ENCODE measurements at regions of chr7 and their contacts with region 1.

Region 1: GRCh38 chr7:92567460-92567859 is 22.7 kb downstream of the FAM133B start:
- DNase-seq: no peak
- CTCF ChIP-seq: no peak

Region 2: GRCh38 chr7:92547579-92547978 is 19.9 kb before region 1 on chr7:
- CTCF ChIA-PET with region 1: interaction called, 16 read pairs
- POLR2A ChIA-PET with region 1: no interaction called
- DNase-seq: no peak
- CTCF ChIP-seq: no peak

Region 3: DNA sequence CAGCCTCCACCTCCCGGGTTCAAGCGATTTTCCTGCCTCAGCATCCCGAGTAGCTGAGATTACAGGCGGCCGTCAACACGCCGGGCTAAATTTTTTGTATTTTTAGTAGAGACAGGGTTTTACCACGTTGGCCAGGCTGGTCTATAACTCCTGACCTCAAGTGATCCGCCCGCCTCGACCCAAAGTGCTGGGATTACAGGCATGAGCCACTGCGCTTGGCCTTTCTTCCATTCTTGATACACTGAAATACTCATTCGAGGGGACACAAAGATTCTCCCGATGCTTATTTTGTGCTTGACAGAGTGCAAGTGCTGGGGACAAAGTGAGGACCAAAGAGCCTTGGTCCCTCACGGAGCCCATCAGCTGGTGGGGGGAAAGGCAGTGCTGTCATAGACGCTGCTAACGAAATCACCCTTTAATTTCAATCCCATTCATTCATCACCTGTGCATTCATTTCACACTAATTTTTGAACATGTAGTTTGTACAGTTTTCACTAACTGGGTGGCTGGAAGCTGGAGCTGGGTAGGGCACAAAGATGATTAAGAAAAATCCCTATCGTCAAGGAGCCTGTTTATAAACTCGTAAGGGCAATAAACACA is 23.4 kb after region 1 on chr7:
- CTCF ChIA-PET with region 1: interaction called, 11 read pairs
- POLR2A ChIA-PET with region 1: no interaction called
- DNase-seq: no peak
- CTCF ChIP-seq: no peak

Region 4: DNA sequence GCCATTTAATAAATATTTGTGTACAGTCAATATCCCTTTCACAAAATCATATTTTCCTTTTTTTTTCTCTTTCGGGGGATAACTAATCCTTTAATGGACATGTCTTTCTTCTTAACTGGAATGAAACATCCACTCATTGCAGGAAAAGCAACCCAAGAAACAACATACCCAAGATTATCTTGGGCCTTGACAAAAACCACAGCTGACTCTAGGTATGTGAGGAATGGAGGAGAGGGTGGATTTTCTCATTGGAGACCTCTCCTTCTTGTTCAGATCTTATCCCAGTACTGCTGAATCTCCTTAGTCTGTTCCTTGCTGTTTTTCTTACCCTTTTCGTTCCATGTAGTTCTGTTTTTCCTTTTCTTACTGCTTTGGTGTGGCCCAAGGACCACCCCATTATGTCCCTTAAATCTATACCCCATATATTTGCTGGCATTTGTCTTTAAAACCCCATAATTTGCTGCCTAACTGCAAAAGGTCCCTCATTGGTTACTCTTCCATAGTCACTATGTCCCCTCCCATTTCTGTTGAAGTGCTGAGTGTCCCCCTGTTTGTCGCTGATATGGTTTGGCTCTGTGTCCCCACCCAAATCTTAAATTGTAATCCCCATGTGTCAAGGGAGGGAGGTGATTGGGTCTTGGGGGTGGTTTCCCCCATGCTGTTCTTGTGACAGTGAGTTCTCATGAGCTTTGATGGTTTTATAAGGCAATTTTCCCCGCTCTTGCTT is 275.7 kb after region 1 on chr7:
- CTCF ChIA-PET with region 1: no interaction called
- POLR2A ChIA-PET with region 1: no interaction called
- DNase-seq: no peak
- CTCF ChIP-seq: no peak

Measured in GM10248 (cell line).